ENCODE measurements at regions of chr12 and their contacts with region 1.

Region 1: DNA sequence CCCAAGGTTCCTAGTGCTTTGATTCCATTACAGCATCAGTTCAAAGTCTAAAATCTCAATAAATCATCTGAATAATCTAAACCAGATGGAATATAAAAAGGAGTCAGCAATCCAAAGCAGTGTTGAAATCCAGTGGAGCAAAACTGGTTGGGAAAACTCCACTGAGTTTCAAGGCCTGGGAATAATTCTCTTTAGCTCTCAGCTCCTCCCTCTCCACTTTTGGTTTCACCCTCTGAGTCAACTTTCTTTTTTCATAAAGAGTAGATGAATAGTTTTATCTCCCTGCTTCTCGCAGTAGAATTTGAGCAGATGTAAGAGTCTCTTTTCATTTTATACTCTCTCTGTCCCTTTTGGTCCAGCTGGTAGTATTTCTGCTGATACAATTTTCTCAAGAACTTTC is 338.6 kb downstream of the APAF1 start:
- DNase-seq: no peak
- H3K4me3 ChIP-seq: no peak overlapping the region
- H3K27ac ChIP-seq: peak overlapping the region in 1 of 59 donors; percentile 46
- H3K27me3 ChIP-seq: no peaks in the 10 kb centered on the region
- CTCF ChIP-seq: no peak

Region 2: DNA sequence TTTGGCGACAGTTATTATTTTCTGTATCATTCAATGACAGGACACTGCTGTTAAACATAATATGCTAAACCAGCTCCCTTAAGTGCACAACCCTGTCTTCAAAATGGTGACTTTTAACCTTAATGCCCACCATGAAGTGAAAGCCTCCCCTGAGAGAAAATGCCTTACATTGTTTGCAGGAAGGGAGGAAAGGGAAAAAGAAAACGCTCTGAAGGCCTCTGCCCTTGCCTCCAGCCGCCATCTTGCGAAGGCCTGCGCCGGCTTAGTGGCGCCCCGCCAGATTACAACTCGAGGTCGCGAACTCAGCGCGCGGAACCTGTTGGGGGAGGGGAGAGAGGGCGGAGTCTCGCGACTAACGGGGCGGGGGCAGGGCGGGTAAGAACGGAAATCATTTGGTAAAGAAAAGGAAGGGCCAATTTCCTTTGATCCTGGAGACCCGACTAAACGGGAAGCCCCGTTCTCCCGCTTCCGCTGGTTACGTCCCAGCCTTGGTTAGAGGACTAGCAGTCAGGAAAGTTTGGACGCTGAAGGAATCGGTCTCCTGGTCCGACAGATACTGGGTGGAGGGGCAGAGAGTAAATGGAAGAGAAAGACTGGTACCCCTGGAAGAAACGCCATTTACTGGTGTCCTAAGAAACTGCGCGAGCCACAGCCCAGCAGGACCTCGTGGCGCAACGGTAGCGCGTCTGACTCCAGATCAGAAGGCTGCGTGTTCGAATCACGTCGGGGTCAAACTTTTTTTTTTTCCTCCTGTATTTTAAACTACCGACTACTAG is 479.9 kb before region 1 on chr12:
- intact Hi-C with region 1: loop called in 1 of 2 experiments (anchors 10 kb)
- DNase-seq: peak; percentile 77 to 93 (median 88)
- H3K4me3 ChIP-seq: peak overlapping the region; percentile 48 to 93 (median 80)
- H3K27ac ChIP-seq: peak overlapping the region; percentile 94 to 100 (median 99)
- H3K27me3 ChIP-seq: no peaks in the 10 kb centered on the region
- CTCF ChIP-seq: peak in 15 of 56 donors; percentile 1 to 48 (median 13)

Region 3: GRCh38 chr12:99005601-99006000 is 22.0 kb after region 1 on chr12:
- intact Hi-C with region 1: no loop called
- DNase-seq: peak in 1 of 10 donors; percentile 30
- H3K4me3 ChIP-seq: peak overlapping the region in 2 of 59 donors; percentile 18
- H3K27ac ChIP-seq: peak overlapping the region in 57 of 59 donors; percentile 3 to 87 (median 74)
- H3K27me3 ChIP-seq: no peaks in the 10 kb centered on the region
- CTCF ChIP-seq: no peak

Measured in dorsolateral prefrontal cortex (tissue), 120 donors.